HepG2 (cell line): ENCODE measurements at regions of chrX and their contacts with region 1.

Region 1: GRCh38 chrX:106692425-106693065 is 34.0 kb upstream of the RNF128 start:
- DNase-seq: peak; percentile 82
- ATAC-seq: peak; percentile 89
- H3K4me3 ChIP-seq: no peak overlapping the region; a peak in 2 of 6 replicates
- H3K27ac ChIP-seq: peak overlapping the region; percentile 76
- H3K4me1 ChIP-seq: peaks cover 23% of the 10 kb centered on the region
- H3K27me3 ChIP-seq: no peaks in the 10 kb centered on the region
- CTCF ChIP-seq: peak; percentile 45
- EP300 ChIP-seq: no peak
- POLR2A ChIP-seq: no peak
- RAD21 ChIP-seq: no peak

Region 2: DNA sequence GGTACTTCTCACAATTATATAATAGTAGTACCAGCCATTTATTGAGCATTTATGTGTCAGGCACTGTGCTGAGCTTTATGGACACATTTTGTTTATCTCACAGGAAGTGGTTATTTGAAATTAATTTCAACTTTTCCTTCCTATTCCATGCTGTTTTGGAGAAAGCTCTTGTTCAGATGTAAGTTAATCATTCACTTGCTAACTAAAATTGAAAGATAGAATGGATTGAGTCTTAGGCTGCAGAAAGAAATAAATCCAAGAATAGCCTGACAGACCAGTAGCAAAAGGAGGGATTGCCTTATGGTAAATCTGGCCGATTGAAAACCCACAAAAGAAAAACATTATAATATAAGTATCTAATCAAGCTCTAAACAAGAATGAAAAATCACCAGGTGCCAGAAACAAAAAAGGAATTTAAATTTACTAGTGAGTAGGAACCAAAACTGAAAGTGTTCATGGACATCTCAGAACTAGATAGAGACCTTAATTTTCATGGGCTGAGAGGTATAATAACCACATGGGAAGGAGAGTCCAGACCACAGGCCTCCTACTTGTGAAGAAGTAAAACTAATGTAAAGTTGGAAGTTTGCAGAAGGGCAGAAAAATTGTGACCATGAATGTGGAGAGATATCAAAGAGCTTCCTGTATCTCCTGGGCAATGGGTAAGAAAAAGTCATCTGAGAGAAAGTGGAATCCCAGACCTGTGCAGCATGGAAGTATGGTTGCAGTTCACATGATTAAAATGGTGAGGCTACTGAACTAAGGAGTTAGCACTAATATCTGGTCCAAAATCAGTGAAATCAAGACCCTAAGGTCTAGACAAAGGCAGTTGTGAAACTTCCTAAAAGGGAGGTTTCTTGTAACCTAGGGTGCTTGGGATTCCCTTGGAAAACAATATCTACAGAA is 42.8 kb before region 1 on chrX:
- CTCF ChIA-PET with region 1: no interaction called
- POLR2A ChIA-PET with region 1: no interaction called
- in situ Hi-C with region 1: no loop called
- intact Hi-C with region 1: no loop called
- DNase-seq: no peak
- ATAC-seq: no peak
- H3K4me3 ChIP-seq: no peak overlapping the region
- H3K27ac ChIP-seq: no peak overlapping the region
- H3K4me1 ChIP-seq: 0 out of 2 replicates have a peak, but pooled peaks cover 11% of the 10 kb centered on the region
- H3K27me3 ChIP-seq: no peaks in the 10 kb centered on the region
- CTCF ChIP-seq: no peak
- EP300 ChIP-seq: no peak
- POLR2A ChIP-seq: no peak
- RAD21 ChIP-seq: no peak

Region 3: GRCh38 chrX:106718709-106719108 is 26.2 kb after region 1 on chrX:
- CTCF ChIA-PET with region 1: no interaction called
- POLR2A ChIA-PET with region 1: interaction called, 20 read pairs
- in situ Hi-C with region 1: no loop called
- intact Hi-C with region 1: no loop called
- DNase-seq: peak; percentile 78
- ATAC-seq: peak; percentile 88
- H3K4me3 ChIP-seq: peak overlapping the region in 1 of 3 experiments; percentile 16; a peak in 1 of 6 replicates
- H3K27ac ChIP-seq: peak overlapping the region; percentile 63
- H3K4me1 ChIP-seq: peaks cover 50% of the 10 kb centered on the region
- H3K27me3 ChIP-seq: no peaks in the 10 kb centered on the region
- CTCF ChIP-seq: no peak
- EP300 ChIP-seq: peak in 1 of 2 experiments; percentile 74; a peak in 1 of 4 replicates
- POLR2A ChIP-seq: no peak
- RAD21 ChIP-seq: no peak

Region 4: GRCh38 chrX:106726485-106727437 is 34.2 kb after region 1 on chrX and contains the start of gene RNF128:
- CTCF ChIA-PET with region 1: no interaction called
- POLR2A ChIA-PET with region 1: interaction called, 11 read pairs
- in situ Hi-C with region 1: no loop called
- intact Hi-C with region 1: loop called (anchors 1 kb)
- DNase-seq: peak; percentile 66
- ATAC-seq: peak; percentile 95
- H3K4me3 ChIP-seq: peak within 1 kb of the TSS; percentile 82 to 88 (median 85)
- H3K27ac ChIP-seq: peak within 1 kb of the TSS; percentile 77
- H3K4me1 ChIP-seq: peaks cover 8% of the 10 kb centered on the region
- H3K27me3 ChIP-seq: no peaks in the 10 kb centered on the region; a peak in 1 of 5 replicates
- CTCF ChIP-seq: no peak
- EP300 ChIP-seq: no peak
- POLR2A ChIP-seq: peak; percentile 84 to 93
- RAD21 ChIP-seq: no peak
- total RNA-seq, gene RNF128: 9.7 and 18.5 TPM in 2 replicates

Region 5: DNA sequence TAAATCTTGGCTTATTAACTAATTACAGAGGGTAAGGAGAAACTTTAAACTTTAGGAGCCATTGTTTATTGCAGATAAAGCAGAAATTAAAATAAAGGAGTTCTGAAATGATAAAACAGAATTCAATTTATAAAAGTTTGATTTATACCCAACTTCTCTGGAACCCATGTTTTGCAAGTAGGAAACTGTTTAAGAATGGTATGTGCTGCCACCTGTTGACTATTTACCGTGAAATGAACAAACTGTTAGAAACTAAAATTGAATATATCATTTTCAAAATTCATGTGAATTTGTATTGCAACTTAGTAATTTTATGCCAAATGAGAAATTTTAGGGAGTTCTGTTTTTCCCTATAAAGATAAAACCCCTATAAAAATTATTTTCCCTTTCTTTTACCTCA is 99.0 kb after region 1 on chrX:
- CTCF ChIA-PET with region 1: no interaction called
- POLR2A ChIA-PET with region 1: no interaction called
- in situ Hi-C with region 1: no loop called
- intact Hi-C with region 1: loop called (anchors 5 kb)
- DNase-seq: no peak
- ATAC-seq: no peak
- H3K4me3 ChIP-seq: no peak overlapping the region
- H3K27ac ChIP-seq: no peak overlapping the region
- H3K4me1 ChIP-seq: no peaks in the 10 kb centered on the region
- H3K27me3 ChIP-seq: no peaks in the 10 kb centered on the region
- CTCF ChIP-seq: no peak
- EP300 ChIP-seq: no peak
- POLR2A ChIP-seq: no peak
- RAD21 ChIP-seq: no peak